ENCODE measurements at regions of chr13 and their contacts with region 1.

Region 1: GRCh38 chr13:51452361-51453206 is at the start of gene INTS6:
- DNase-seq: peak in 2 of 4 experiments; percentile 92 to 97
- ATAC-seq: peak; percentile 86
- H3K4me3 ChIP-seq: peak within 1 kb of the TSS; percentile 88
- H3K27ac ChIP-seq: peak within 1 kb of the TSS; percentile 96
- H3K4me1 ChIP-seq: peaks cover 4 to 12% of the 10 kb centered on the region in 2 experiments; a peak in 3 of 5 replicates
- H3K27me3 ChIP-seq: no peaks in the 10 kb centered on the region
- CTCF ChIP-seq: no peak
- EP300 ChIP-seq: no peak
- POLR2A ChIP-seq: peak; percentile 99
- RAD21 ChIP-seq: no peak
- polyA plus RNA-seq, gene INTS6: 3.7 to 4.3 TPM

Region 2: GRCh38 chr13:51435002-51435578 is 17.5 kb before region 1 on chr13:
- CTCF ChIA-PET with region 1: no interaction called
- POLR2A ChIA-PET with region 1: interaction called, 10 read pairs
- in situ Hi-C with region 1: no loop called
- intact Hi-C with region 1: no loop called
- DNase-seq: no peak
- ATAC-seq: no peak
- H3K4me3 ChIP-seq: no peak overlapping the region
- H3K27ac ChIP-seq: no peak overlapping the region
- H3K4me1 ChIP-seq: no peaks in the 10 kb centered on the region; a peak in 1 of 5 replicates
- H3K27me3 ChIP-seq: no peaks in the 10 kb centered on the region
- CTCF ChIP-seq: peak in 2 of 3 experiments; percentile 20 to 58; a peak in 3 of 6 replicates
- EP300 ChIP-seq: no peak
- POLR2A ChIP-seq: no peak
- RAD21 ChIP-seq: peak; percentile 28 to 55; a peak in 2 of 4 replicates

Region 3: GRCh38 chr13:51469790-51470189 is 17.2 kb after region 1 on chr13:
- CTCF ChIA-PET with region 1: no interaction called
- POLR2A ChIA-PET with region 1: interaction called, 21 read pairs
- in situ Hi-C with region 1: no loop called
- intact Hi-C with region 1: no loop called
- DNase-seq: no peak
- ATAC-seq: no peak
- H3K4me3 ChIP-seq: no peak overlapping the region
- H3K27ac ChIP-seq: no peak overlapping the region
- H3K4me1 ChIP-seq: no peaks in the 10 kb centered on the region; a peak in 1 of 5 replicates
- H3K27me3 ChIP-seq: no peaks in the 10 kb centered on the region
- CTCF ChIP-seq: no peak
- EP300 ChIP-seq: no peak
- POLR2A ChIP-seq: no peak
- RAD21 ChIP-seq: no peak

Region 4: GRCh38 chr13:51475727-51476501 is 23.3 kb after region 1 on chr13:
- CTCF ChIA-PET with region 1: no interaction called
- POLR2A ChIA-PET with region 1: interaction called, 21 read pairs
- in situ Hi-C with region 1: no loop called
- intact Hi-C with region 1: no loop called
- DNase-seq: no peak
- ATAC-seq: no peak
- H3K4me3 ChIP-seq: no peak overlapping the region
- H3K27ac ChIP-seq: no peak overlapping the region
- H3K4me1 ChIP-seq: no peaks in the 10 kb centered on the region; a peak in 1 of 5 replicates
- H3K27me3 ChIP-seq: 0 out of 5 replicates have a peak, but pooled peaks cover 0 to 5% of the 10 kb centered on the region in 2 experiments
- CTCF ChIP-seq: no peak
- EP300 ChIP-seq: no peak
- POLR2A ChIP-seq: no peak
- RAD21 ChIP-seq: no peak

Region 5: DNA sequence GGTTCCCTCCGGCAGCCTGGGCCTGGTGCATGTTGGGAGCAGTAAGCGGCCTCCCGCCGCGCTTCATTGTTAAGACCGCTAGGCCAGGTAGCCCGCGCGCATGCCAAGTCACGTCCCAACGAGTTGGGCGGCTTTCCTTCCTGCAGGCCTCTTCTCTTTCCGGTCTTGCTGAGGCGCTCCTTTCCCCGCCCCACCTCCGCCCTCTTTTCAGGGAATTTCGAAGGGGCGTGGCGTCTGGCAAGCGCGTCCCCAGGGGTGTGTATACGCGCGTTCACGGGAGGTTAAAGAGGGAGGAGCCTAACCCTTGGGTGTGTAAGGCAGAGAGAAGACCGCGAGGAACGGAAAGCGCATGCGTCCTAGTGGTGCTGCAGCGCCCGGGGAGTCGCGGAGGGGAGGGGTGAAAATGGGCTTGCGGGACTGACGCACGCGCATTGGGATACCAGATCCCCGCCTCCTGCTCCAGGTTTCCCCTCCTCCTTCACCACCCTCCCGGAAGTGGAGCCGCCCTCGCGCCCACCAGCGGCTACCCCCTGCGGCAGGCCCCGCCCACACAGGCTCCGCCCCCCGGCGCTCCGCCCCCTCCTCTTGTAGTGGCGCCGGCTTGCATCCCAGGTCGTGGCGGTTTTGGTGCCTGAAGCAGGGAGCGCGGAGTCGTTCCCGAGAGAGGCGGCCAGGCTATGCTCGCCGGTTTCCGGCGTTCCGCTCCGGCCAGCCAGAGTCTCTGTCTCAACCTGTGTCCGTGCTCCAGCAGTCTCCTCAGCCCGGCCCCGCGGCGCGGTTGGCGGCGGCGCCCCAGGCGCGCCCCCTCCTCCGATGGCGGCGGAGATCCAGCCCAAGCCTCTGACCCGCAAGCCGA is 131.5 kb after region 1 on chr13 and contains the start of gene WDFY2:
- CTCF ChIA-PET with region 1: no interaction called
- POLR2A ChIA-PET with region 1: interaction called, 13 read pairs
- in situ Hi-C with region 1: no loop called
- intact Hi-C with region 1: loop called (anchors 1 kb)
- DNase-seq: peak; percentile 92 to 97 (median 92)
- ATAC-seq: peak; percentile 91
- H3K4me3 ChIP-seq: peak within 1 kb of the TSS; percentile 82
- H3K27ac ChIP-seq: peak within 1 kb of the TSS; percentile 85
- H3K4me1 ChIP-seq: peaks cover 10 to 32% of the 10 kb centered on the region in 2 experiments; a peak in 4 of 5 replicates
- H3K27me3 ChIP-seq: no peaks in the 10 kb centered on the region
- CTCF ChIP-seq: peak in 2 of 3 experiments; percentile 18 to 37; a peak in 3 of 6 replicates
- EP300 ChIP-seq: peak; percentile 28; the same call in 1 of the 2 replicates
- POLR2A ChIP-seq: peak; percentile 64
- RAD21 ChIP-seq: no peak
- polyA plus RNA-seq, gene WDFY2: 0.66 to 1.1 TPM

Region 6: DNA sequence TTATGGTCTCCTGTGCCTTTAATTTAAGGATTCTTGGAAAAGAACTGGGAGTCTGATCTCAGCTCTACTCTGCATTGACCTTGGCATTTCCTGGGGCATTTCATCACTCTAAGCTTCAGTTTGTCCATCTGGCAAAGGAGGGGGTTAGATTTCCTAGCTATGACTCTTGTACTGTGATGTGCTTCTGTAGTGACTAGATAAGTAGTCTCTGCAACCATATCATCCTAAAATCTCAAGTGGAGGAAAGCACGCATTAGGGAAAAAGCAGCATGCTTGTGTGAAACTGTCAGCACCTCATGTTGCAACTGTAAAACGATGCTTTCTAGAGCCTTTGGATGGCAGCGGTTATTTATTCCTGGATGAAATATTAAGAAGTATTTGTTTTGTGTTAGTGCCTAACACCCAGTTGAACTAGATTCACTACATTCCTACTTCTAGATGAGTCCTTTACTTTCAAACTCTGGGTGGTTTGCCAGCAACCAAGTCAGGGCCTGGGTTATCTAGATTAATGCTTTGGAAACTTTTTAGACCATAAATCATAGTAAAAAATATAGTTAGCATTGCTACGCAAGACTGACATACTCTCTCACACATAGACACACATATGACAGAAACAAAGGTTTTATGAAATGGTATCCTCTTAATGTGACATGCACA is 138.5 kb after region 1 on chr13:
- CTCF ChIA-PET with region 1: no interaction called
- POLR2A ChIA-PET with region 1: interaction called, 13 read pairs
- in situ Hi-C with region 1: no loop called
- intact Hi-C with region 1: loop called (anchors 2 kb)
- DNase-seq: peak; percentile 10 to 81 (median 42)
- ATAC-seq: peak; percentile 87
- H3K4me3 ChIP-seq: no peak overlapping the region
- H3K27ac ChIP-seq: peak overlapping the region; percentile 72
- H3K4me1 ChIP-seq: peaks cover 0 to 44% of the 10 kb centered on the region in 2 experiments; a peak in 4 of 5 replicates
- H3K27me3 ChIP-seq: no peaks in the 10 kb centered on the region
- CTCF ChIP-seq: no peak
- EP300 ChIP-seq: peak; percentile 96
- POLR2A ChIP-seq: no peak
- RAD21 ChIP-seq: no peak

Region 7: DNA sequence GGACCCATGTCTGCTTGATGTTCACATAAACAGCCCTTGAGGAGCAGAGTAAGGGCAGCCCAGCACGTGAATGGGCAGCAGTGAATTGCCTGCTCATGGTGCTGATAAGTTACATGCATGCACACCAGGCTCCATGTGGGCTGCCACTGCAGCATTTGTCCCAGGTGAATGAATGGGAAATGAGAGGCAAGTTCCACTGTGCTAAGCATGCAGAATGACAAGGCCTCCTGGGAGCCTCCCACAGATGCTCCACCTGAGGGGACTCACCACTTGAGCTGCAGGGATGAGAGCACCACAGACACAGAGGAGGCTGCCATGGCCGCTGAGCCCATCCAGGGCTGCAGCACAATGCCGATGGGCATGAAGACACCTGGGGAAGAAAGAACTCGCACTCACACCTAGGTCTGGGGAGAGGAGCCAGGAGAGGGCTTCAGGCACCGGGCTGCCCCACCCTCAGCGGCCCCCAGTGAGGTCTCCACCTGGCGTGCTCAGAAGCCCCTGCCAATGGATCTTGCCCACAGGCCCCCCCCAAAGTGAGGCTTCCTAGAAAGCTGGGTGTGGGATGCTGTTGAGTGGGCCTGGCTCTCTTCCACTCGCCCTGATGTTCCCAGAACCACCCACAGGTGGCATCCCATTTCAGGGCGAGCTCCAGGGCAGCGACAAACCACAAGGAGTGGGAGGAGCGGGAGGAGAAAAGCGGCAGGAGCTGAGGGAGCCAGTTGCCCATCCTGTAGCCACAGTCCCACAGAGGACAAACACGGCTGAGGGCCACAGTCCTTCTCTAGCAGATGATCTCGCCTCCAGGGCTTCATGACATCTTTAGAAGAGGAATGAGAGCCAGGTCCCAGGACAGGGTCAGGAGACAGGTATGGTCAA is 483.0 kb after region 1 on chr13:
- CTCF ChIA-PET with region 1: no interaction called
- POLR2A ChIA-PET with region 1: no interaction called
- in situ Hi-C with region 1: no loop called
- intact Hi-C with region 1: no loop called
- DNase-seq: peak; percentile 22 to 33 (median 30)
- ATAC-seq: peak; percentile 77
- H3K4me3 ChIP-seq: no peak overlapping the region
- H3K27ac ChIP-seq: no peak overlapping the region
- H3K4me1 ChIP-seq: peaks cover 0 to 15% of the 10 kb centered on the region in 2 experiments; a peak in 2 of 5 replicates
- H3K27me3 ChIP-seq: no peaks in the 10 kb centered on the region
- CTCF ChIP-seq: peak in 2 of 3 experiments; percentile 46 to 48; a peak in 5 of 6 replicates
- EP300 ChIP-seq: no peak
- POLR2A ChIP-seq: no peak
- RAD21 ChIP-seq: peak in 1 of 2 experiments; percentile 52; a peak in 3 of 4 replicates

Measured in K562 (cell line).